Colonic mucosa (tissue), 4 donors: ENCODE measurements at regions of chr19 and their contacts with region 1.

Region 1: GRCh38 chr19:4139614-4140236 is 13.7 kb upstream of the CREB3L3 start:
- DNase-seq: peak; percentile 97
- H3K4me3 ChIP-seq: no peak overlapping the region
- H3K27ac ChIP-seq: peak overlapping the region; percentile 73
- H3K4me1 ChIP-seq: peaks cover 3% of the 10 kb centered on the region
- H3K27me3 ChIP-seq: no peaks in the 10 kb centered on the region
- CTCF ChIP-seq: peak; percentile 79

Region 2: GRCh38 chr19:3942790-3943409 is 196.8 kb before region 1 on chr19:
- intact Hi-C with region 1: no loop called
- DNase-seq: no peak
- H3K4me3 ChIP-seq: no peak overlapping the region
- H3K27ac ChIP-seq: no peak overlapping the region
- H3K4me1 ChIP-seq: no peaks in the 10 kb centered on the region
- H3K27me3 ChIP-seq: no peaks in the 10 kb centered on the region
- CTCF ChIP-seq: no peak

Region 3: DNA sequence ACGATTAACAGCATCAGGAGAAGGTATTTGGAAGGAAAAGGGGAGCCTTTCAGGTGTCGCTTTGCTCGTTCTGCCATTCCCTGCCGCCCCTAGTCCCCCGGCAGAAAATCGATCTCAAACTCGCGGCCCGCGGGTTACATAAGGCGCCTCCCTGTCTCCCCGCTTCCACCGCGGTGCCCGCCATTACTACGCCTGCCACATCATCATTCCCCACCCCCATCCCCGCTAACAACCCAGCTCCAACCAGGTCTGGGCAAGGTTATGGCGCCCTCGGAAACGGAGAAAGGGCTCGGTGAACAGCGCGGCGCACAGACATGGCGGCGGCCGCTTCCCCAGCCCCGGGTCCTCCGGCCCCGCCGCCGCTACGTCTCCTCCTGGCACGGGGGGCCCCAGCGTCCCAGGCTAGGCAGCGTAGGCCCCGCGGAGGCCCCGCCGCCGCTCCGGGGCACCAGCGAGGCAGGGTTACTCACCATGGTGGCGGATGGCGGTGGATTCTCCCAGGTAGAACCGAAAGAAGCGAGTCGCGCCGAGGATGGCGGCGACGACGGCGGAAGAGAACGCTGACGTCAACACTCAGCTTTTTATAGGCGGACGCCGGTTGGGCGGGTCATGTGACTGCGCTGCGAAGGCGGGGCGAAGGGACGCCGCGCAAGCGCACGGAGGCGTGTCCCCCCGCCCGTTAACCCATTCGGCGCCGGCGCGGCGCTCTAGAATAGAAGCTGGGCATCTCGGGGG is 154.7 kb before region 1 on chr19 and contains the start of gene EEF2:
- intact Hi-C with region 1: loop called (anchors 10 kb)
- DNase-seq: peak; percentile 91
- H3K4me3 ChIP-seq: peak within 1 kb of the TSS; percentile 83
- H3K27ac ChIP-seq: peak within 1 kb of the TSS; percentile 93
- H3K4me1 ChIP-seq: peaks cover 17% of the 10 kb centered on the region
- H3K27me3 ChIP-seq: no peaks in the 10 kb centered on the region
- CTCF ChIP-seq: no peak
- total RNA-seq, gene EEF2: 2,109 to 2,241 TPM

Region 4: GRCh38 chr19:4186087-4186993 is 46.6 kb after region 1 on chr19:
- intact Hi-C with region 1: loop called (anchors 5 kb)
- DNase-seq: peak; percentile 95
- H3K4me3 ChIP-seq: no peak overlapping the region
- H3K27ac ChIP-seq: no peak overlapping the region
- H3K4me1 ChIP-seq: peaks cover 14% of the 10 kb centered on the region
- H3K27me3 ChIP-seq: no peaks in the 10 kb centered on the region
- CTCF ChIP-seq: peak; percentile 71